Mammary epithelial cell (primary cell): ENCODE measurements at regions of chr19 and their contacts with region 1.

Region 1: GRCh38 chr19:16829010-16829821 is at the start of gene SIN3B:
- DNase-seq: peak; percentile 86
- H3K4me3 ChIP-seq: peak within 1 kb of the TSS; percentile 88 to 91 (median 89)
- H3K27ac ChIP-seq: peak within 1 kb of the TSS; percentile 52
- H3K4me1 ChIP-seq: peaks cover 30% of the 10 kb centered on the region
- H3K27me3 ChIP-seq: no peaks in the 10 kb centered on the region
- CTCF ChIP-seq: no peak
- total RNA-seq, gene SIN3B: 35.5 to 67.2 TPM

Region 2: GRCh38 chr19:16737911-16738310 is 91.3 kb before region 1 on chr19:
- CTCF ChIA-PET with region 1: no interaction called
- dilution Hi-C with region 1: loop called (anchors 10 kb)
- in situ Hi-C with region 1: no loop called
- intact Hi-C with region 1: no loop called
- DNase-seq: no peak
- H3K4me3 ChIP-seq: no peak overlapping the region
- H3K27ac ChIP-seq: no peak overlapping the region
- H3K4me1 ChIP-seq: peaks cover 5% of the 10 kb centered on the region
- H3K27me3 ChIP-seq: no peaks in the 10 kb centered on the region
- CTCF ChIP-seq: no peak

Region 3: DNA sequence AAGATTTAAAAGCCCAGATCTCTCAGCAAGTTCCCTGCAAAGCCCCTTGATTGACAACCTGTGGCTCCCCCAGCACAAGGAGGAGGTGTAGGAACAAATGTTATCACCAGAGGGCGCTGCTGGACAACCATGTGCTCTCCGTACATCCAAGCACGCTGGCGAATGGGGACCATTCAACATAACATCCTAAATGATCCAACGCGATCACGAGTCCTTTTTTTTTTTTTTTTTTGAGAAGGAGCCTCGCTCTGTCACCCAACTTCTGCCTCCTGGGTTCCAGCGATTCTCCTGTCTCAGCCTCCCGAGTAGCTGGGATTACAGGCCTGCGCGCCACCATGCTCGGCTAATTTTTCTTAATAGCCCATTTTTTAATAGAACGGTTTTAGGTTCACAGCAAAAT is 57.6 kb before region 1 on chr19:
- CTCF ChIA-PET with region 1: no interaction called
- dilution Hi-C with region 1: loop called (anchors 10 kb)
- in situ Hi-C with region 1: no loop called
- intact Hi-C with region 1: no loop called
- DNase-seq: peak; percentile 55
- H3K4me3 ChIP-seq: no peak overlapping the region
- H3K27ac ChIP-seq: no peak overlapping the region
- H3K4me1 ChIP-seq: peaks cover 3% of the 10 kb centered on the region
- H3K27me3 ChIP-seq: no peaks in the 10 kb centered on the region
- CTCF ChIP-seq: peak; percentile 81 to 86

Region 4: GRCh38 chr19:16778796-16779411 is 50.3 kb before region 1 on chr19:
- CTCF ChIA-PET with region 1: no interaction called
- dilution Hi-C with region 1: loop called (anchors 10 kb)
- in situ Hi-C with region 1: no loop called
- intact Hi-C with region 1: loop called (anchors 2 kb)
- DNase-seq: peak; percentile 40
- H3K4me3 ChIP-seq: no peak overlapping the region
- H3K27ac ChIP-seq: no peak overlapping the region
- H3K4me1 ChIP-seq: no peaks in the 10 kb centered on the region
- H3K27me3 ChIP-seq: no peaks in the 10 kb centered on the region
- CTCF ChIP-seq: peak; percentile 58 to 87

Region 5: DNA sequence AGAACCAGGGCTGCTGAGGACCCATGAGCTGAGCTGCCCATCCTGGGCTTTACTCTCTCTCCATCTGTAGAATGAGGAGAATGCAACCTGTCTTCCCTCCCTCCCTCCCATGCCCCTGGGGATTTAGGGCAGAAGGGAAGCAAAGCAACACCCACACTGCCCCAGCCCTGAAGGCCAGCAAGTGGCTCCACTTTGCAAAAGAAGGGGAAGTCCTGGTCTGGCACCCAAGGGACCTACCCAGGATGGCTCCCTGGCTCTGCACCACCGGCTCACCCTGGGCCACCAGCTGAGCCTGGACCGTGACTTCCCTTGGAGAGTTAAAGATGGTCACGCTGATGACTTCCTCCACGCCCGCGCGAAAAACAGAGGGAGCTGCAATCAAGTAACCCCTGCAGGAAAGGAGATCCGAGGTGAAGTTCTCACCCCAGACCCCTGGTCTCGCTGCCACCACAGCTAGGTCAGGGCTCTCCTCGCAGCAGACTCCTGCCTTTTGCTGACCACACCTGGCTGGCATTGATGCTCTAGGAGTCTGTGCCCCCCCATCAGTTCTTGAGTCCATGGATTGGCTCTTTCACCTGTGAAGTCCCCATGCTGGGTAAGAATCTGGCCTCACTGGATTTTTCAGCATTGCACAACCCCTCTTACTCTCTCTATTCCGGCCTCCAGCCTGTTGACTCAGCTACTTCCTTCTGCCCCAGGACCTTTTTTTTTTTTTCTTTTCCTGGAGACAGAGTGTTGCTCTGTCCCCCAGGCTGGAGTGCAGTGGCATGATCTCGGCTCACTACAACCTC is 192.8 kb after region 1 on chr19:
- CTCF ChIA-PET with region 1: no interaction called
- dilution Hi-C with region 1: loop called (anchors 10 kb)
- in situ Hi-C with region 1: no loop called
- intact Hi-C with region 1: no loop called
- DNase-seq: peak; percentile 92
- H3K4me3 ChIP-seq: no peak overlapping the region
- H3K27ac ChIP-seq: peak overlapping the region; percentile 1
- H3K4me1 ChIP-seq: peaks cover 24% of the 10 kb centered on the region
- H3K27me3 ChIP-seq: no peaks in the 10 kb centered on the region
- CTCF ChIP-seq: no peak